ENCODE measurements at regions of chr2 and their contacts with region 1.

Region 1: DNA sequence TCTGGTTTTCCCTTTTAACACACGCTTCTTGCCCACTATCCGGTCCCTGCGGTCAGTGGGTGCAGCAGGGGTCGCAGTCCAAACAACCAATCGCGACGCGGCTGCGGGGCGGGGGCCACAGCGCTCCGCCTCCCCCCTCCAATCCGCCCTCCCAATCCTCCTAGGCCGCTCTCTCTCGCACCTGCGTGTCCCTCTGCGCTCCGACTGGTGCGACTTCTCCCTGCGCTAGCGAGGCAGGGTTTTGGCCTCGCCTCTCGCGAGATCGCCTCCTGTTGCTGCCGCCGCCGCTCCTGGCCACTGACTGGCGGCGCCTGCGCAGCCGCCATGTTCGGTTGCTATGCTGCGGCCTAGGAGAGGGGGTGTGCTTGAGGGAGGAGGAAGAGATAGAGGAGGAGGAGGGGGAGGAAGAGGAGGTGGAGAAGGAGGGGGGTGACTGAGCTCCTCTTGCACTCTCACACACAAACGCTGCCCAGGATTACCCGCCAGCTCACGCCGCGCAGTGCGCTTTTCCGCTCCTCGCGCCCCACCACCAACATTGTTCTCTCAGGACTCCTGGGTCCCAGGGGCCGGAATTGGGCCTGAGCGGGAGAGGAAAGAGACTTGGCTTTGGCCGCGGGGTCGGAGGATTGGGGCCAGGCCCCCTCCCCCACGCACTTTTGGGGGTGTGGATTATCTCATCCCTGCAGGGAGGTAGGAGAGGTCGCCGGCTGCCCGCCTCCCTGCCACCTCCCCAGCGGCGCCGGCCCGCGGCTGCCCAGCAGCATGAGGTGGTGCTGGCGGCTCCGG is at the start of gene PTPN4:
- DNase-seq: peak; percentile 98
- H3K4me3 Mint-ChIP-seq: peak within 1 kb of the TSS; percentile 89
- H3K27ac Mint-ChIP-seq: peak within 1 kb of the TSS; percentile 93
- H3K4me1 Mint-ChIP-seq: peaks cover 48% of the 10 kb centered on the region
- H3K27me3 Mint-ChIP-seq: no peaks in the 10 kb centered on the region
- total RNA-seq, gene PTPN4: 29.4 to 31.6 TPM

Region 2: DNA sequence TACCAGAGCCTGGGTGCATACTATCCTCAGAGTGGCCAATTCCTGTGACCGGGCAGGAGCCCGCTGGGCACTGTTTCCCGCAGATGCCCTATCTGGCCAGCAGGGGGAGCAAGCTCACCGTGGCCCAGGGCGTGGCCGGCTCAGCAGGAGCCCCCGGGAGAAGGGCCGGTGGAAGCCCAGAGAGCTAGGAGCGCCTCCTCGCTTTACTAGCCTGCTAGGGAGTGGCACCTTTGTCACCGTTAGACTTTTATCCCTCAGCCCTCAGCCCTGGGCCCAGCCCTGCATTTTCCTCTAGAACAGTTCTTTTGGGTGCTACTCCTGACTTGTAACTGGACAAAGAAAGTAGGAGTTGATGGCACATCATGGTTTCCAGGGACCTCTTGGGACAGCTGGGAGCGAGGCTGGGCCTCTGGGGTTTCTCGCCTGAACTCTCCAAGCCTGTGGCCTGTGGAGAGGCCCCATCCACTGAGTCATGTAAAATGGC is 56.7 kb before region 1 on chr2:
- CTCF ChIA-PET with region 1: interaction called, 9 read pairs
- POLR2A ChIA-PET with region 1: interaction called, 4 read pairs
- intact Hi-C with region 1: loop called (anchors 1 kb)
- DNase-seq: peak; percentile 80
- H3K4me3 Mint-ChIP-seq: no peak overlapping the region
- H3K27ac Mint-ChIP-seq: no peak overlapping the region
- H3K4me1 Mint-ChIP-seq: peaks cover 19% of the 10 kb centered on the region
- H3K27me3 Mint-ChIP-seq: no peaks in the 10 kb centered on the region

Region 3: DNA sequence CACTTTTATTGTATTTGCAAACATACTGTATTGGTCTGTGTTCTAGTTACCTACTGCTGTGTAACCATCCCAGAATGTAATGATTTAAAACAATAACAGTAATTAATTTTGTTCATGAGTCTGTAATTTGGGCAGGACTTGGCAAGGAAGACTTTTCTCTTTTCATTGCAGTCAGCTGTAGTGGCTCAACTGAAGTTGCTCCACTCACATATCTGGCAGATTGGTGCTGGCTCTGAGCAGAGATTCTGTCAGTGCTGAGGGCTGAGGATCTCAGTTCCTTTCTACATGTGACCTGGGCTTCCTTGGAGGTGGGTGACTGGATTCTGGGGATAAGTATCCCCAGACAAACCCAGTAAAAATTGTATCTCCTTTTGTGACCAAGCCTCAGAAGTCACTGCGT is 26.7 kb after region 1 on chr2:
- CTCF ChIA-PET with region 1: no interaction called
- POLR2A ChIA-PET with region 1: no interaction called
- intact Hi-C with region 1: no loop called
- DNase-seq: no peak
- H3K4me3 Mint-ChIP-seq: no peak overlapping the region
- H3K27ac Mint-ChIP-seq: no peak overlapping the region
- H3K4me1 Mint-ChIP-seq: peaks cover 30% of the 10 kb centered on the region
- H3K27me3 Mint-ChIP-seq: no peaks in the 10 kb centered on the region

Region 4: DNA sequence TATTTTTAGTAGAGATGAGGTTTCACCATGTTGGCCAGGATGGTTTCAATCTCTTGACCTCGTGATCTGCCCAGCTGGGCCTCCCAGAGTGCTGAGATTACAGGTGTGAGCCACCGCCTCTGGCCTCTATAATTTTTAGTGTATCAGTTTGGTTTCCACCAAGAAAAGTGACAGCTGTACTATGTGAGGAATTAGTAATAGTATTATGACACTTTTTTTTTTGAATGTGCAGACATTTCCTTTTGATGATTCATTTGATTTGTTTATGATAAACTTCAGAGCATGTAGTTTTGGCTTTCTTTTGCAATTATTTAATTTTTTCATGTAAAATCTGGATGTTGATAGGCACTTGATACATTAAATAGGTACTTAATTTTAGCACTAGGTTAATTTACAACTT is 61.6 kb after region 1 on chr2:
- CTCF ChIA-PET with region 1: interaction called, 26 read pairs
- POLR2A ChIA-PET with region 1: interaction called, 3 read pairs
- intact Hi-C with region 1: loop called (anchors 1 kb)
- DNase-seq: peak; percentile 51
- H3K4me3 Mint-ChIP-seq: no peak overlapping the region
- H3K27ac Mint-ChIP-seq: no peak overlapping the region
- H3K4me1 Mint-ChIP-seq: peaks cover 42% of the 10 kb centered on the region
- H3K27me3 Mint-ChIP-seq: no peaks in the 10 kb centered on the region

Region 5: GRCh38 chr2:119983108-119983507 is 223.5 kb after region 1 on chr2:
- CTCF ChIA-PET with region 1: no interaction called
- POLR2A ChIA-PET with region 1: no interaction called
- intact Hi-C with region 1: no loop called
- DNase-seq: no peak
- H3K4me3 Mint-ChIP-seq: no peak overlapping the region
- H3K27ac Mint-ChIP-seq: no peak overlapping the region
- H3K4me1 Mint-ChIP-seq: no peaks in the 10 kb centered on the region
- H3K27me3 Mint-ChIP-seq: no peaks in the 10 kb centered on the region

Region 6: DNA sequence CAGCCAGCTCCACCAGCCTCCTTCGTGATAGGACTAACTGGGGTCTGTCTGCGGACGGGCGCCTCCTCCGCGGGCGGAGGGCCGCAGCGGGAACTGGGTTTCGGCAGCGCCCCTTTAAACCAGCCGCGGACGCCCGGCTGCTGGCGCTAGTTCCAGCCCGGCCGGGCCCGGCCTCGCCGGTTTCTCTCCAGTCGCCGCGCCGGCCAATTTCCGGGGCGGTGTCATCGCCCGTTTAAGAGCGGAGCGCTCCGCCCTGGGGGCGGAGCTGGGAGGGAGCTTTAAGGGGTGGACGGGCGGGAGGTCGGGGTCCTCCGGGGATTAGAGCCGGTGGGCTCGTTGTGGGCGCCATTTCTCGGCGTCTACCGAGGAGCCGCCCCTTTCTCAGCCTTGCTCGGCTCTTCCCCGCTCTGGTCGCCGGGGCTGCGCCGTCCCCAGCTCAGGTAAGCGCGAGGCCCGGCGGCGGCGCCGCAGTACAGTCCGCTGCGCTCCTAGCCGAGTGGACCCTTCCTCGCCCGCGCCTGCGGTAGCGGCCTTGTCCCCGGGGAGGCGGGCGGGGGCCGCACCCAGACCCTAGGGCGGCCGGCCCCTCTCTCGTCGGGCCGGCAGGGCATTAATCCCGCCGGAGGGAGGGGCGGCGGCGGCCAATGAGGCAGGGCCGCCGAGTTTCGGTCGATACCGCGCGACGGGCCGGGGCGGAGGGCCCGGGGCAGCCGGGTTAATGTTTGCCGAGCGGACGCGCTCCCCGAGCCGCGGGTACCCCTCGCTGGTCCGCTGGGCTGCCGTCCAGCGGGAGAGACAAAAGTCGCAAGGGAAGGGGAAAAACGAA is 253.3 kb after region 1 on chr2 and contains the start of gene EPB41L5:
- CTCF ChIA-PET with region 1: no interaction called
- POLR2A ChIA-PET with region 1: interaction called, 3 read pairs
- intact Hi-C with region 1: loop called (anchors 1 kb)
- DNase-seq: peak; percentile 87
- H3K4me3 Mint-ChIP-seq: peak within 1 kb of the TSS; percentile 73
- H3K27ac Mint-ChIP-seq: no peak within 1 kb of the TSS
- H3K4me1 Mint-ChIP-seq: peaks cover 10% of the 10 kb centered on the region
- H3K27me3 Mint-ChIP-seq: peaks cover 1% of the 10 kb centered on the region
- total RNA-seq, gene EPB41L5: 2.5 to 2.7 TPM

Region 7: GRCh38 chr2:120125177-120125576 is 365.5 kb after region 1 on chr2:
- CTCF ChIA-PET with region 1: no interaction called
- POLR2A ChIA-PET with region 1: no interaction called
- intact Hi-C with region 1: no loop called
- DNase-seq: no peak
- H3K4me3 Mint-ChIP-seq: no peak overlapping the region
- H3K27ac Mint-ChIP-seq: no peak overlapping the region
- H3K4me1 Mint-ChIP-seq: no peaks in the 10 kb centered on the region
- H3K27me3 Mint-ChIP-seq: no peaks in the 10 kb centered on the region

Region 8: DNA sequence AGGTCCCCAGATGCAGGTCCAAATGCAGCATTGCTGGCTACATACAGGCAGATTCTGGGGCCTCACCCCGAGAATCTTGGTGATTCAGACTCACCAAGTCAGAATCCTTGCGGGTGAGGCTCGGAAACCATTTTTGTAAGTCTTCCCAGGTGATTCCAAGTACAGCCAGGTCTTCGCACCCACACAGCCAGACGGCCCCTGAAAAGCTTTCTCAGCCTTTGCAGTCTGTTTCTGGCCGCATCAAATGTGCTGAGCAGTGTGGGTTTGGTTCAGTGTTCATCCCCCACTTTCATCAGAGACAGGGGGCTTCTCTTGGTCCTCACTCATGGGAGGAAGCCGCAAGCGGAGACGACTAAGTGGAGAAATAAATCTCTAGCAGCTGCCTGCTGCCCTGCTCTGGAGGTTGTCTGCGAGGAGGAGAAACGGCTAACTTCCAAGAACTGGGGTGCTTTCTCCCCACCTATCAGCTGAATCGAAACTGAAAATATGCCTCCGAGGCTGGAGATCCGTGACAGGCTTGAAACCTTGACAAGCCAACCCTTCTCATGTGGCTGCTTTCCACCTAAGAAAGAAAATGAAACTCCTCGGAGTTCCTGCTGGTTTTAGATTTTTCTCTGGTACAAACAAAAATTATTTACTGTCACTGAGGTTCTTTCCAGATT is 472.5 kb after region 1 on chr2:
- CTCF ChIA-PET with region 1: no interaction called
- POLR2A ChIA-PET with region 1: interaction called, 3 read pairs
- intact Hi-C with region 1: loop called (anchors 2 kb)
- DNase-seq: peak; percentile 85
- H3K4me3 Mint-ChIP-seq: peak overlapping the region; percentile 82
- H3K27ac Mint-ChIP-seq: peak overlapping the region; percentile 96
- H3K4me1 Mint-ChIP-seq: peaks cover 40% of the 10 kb centered on the region
- H3K27me3 Mint-ChIP-seq: no peaks in the 10 kb centered on the region